Right ventricle myocardium superior (tissue), 1 donor: ENCODE measurements at regions of chr15 and their contacts with region 1.

Region 1: DNA sequence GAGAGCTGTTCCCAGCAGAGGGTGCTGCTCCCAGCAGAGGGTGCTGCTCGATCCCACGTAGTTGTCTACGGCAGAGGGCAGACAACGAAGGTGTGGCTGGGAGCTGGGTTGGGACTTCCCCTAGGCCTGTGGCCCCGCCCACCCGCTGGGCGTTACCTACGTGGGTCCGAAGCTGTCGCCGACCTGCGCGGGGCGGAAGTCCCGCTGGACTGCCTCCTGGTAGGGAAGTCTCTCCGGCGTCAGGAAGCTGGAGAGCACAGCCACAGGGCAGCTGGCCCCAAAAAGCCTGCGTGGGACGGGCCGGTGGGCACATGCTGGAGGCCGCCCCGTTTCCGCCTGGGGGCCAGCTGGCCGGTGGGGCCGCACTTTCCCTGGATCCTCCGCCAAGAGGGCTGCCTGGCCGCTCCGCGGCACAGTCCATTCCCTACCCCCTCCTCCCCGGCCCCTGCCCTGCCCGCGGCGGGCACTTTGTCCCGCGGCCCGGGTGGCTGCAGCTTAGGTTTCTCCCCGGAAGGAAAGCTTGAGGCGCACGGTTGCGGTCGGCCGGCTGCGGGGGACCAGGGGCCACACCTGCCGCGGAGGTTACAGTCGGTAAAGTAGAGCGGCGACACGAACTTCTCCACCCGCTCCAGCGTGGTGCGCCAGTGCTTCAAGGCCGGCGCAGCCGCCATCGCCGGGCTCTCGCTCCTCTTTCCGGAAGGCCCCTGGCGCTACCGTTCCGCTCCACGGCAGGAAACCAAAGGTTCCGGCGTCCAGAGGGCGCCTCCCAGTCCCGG is at the start of gene MAN2C1:
- DNase-seq: peak; percentile 97
- ATAC-seq: peak; percentile 97
- total RNA-seq, gene MAN2C1: 94.7 TPM

Region 2: DNA sequence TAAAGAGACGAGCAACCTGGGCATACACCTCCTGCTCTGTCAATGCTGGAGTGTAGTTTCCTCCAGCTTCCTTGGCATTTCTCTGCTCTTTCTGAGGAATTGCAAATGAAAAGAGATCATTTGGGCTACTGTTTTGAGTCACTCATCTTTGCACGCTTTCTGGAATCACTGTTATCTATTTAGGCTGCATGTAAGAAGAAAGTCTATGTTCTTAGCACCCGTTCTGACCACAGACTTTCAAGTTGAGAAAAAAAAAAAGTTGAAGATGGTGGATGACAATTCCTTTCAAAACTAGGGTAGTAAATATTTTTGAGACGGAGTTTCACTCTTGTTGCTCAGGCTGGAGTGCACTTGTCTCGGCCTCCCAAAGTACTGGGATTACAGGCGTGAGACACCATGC is 42.1 kb after region 1 on chr15:
- intact Hi-C with region 1: loop called (anchors 5 kb)
- DNase-seq: no peak
- ATAC-seq: no peak

Region 3: DNA sequence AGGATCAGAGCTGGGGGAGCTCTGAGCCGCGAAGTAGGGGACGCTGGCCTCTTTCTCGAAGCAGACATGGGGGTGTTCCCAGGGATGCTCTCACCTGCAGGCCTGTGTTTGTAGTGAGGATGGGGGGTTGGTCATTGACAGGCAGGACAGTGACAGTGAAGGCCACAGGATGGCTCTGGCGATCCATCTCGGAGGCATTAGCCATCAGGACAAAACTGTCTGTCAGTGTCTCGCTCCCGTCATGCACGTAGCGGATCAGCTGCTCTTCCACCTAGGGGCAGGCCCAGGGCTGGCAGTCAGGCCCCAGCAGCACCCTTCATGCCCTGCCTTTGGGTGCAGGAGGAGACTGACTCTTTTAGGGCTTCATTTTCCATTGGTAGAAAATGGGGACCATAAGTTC is 316.5 kb after region 1 on chr15:
- intact Hi-C with region 1: loop called (anchors 10 kb)
- DNase-seq: no peak
- ATAC-seq: no peak